Sigmoid colon (tissue), 7 donors: ENCODE measurements at regions of chr10 and their contacts with region 1.

Region 1: GRCh38 chr10:80924063-80924952 is 386.6 kb downstream of the SH2D4B start:
- DNase-seq: no peak
- H3K4me3 ChIP-seq: no peak overlapping the region
- H3K27ac ChIP-seq: no peak overlapping the region
- H3K4me1 ChIP-seq: no peaks in the 10 kb centered on the region
- H3K27me3 ChIP-seq: no peaks in the 10 kb centered on the region
- CTCF ChIP-seq: peak; percentile 6 to 59 (median 33)
- EP300 ChIP-seq: no peak
- POLR2A ChIP-seq: no peak

Region 2: GRCh38 chr10:80389809-80390208 is 534.5 kb before region 1 on chr10:
- intact Hi-C with region 1: loop called (anchors 5 kb)
- DNase-seq: no peak
- H3K4me3 ChIP-seq: no peak overlapping the region
- H3K27ac ChIP-seq: no peak overlapping the region
- H3K4me1 ChIP-seq: no peaks in the 10 kb centered on the region
- H3K27me3 ChIP-seq: no peaks in the 10 kb centered on the region
- CTCF ChIP-seq: no peak
- EP300 ChIP-seq: no peak
- POLR2A ChIP-seq: no peak

Region 3: GRCh38 chr10:80609331-80609730 is 315.0 kb before region 1 on chr10:
- intact Hi-C with region 1: no loop called
- DNase-seq: no peak
- H3K4me3 ChIP-seq: no peak overlapping the region
- H3K27ac ChIP-seq: no peak overlapping the region
- H3K4me1 ChIP-seq: no peaks in the 10 kb centered on the region
- H3K27me3 ChIP-seq: no peaks in the 10 kb centered on the region
- CTCF ChIP-seq: no peak
- EP300 ChIP-seq: no peak
- POLR2A ChIP-seq: no peak

Region 4: DNA sequence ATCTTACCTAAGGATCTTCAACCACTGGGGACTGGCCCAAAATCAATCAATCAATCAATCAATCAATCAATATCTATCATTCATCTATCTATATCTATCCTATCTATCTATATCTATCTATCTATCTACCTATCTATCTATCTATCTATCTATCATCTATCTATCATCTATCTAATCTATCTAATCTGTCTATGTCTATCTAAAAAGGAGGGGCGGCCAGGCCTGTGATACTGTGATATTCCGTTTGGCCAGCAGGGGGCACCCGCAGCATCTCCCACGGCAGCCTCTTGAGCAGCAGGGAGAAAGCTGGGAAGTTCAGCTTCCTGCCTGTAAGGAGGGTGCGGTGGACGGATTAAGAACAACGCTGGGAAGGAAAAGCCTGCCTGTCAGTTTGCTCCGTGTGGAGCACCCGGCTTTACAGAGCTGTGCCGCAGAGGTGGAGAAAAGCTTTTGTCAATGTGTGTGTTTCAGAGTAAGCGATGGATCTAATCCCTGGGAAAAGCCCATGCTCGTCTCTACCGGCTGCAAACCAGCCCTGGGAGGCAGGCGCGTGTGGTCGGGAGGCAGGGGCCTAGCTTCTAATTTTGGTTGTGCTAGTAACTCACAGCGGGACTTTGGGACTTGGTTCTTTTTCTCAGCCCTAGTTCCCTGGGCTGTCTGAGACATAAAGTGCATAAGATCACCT is 261.6 kb before region 1 on chr10:
- intact Hi-C with region 1: loop called (anchors 10 kb)
- DNase-seq: peak; percentile 89
- H3K4me3 ChIP-seq: peak overlapping the region in 3 of 4 donors; percentile 9 to 32 (median 29)
- H3K27ac ChIP-seq: peak overlapping the region; percentile 55 to 65 (median 61)
- H3K4me1 ChIP-seq: peaks cover 0 to 14% (median 2%) of the 10 kb centered on the region in 4 donors
- H3K27me3 ChIP-seq: no peaks in the 10 kb centered on the region
- CTCF ChIP-seq: peak; percentile 48 to 95 (median 84)
- EP300 ChIP-seq: no peak
- POLR2A ChIP-seq: no peak

Region 5: DNA sequence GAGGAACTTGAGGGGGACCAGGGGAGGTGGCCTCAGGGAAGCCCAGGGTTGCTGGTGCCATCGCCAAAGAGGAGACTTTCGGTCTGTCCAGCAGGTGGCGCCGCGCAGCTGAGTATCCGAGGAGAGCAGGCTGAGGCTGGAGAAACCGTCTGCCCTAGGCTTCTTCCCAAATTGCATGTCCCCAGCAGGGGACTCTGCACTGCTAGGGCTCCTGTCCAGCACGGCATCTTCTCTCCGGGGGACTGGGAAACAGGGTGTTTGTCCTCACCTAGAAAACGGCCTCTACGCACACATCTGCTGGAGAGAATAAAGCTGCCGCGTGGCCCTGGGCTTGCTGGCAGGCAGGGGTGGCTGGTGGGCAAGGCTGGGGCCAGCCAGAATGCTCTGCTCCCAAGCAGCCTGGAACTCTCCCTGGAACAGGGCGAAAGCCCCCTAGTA is 224.7 kb before region 1 on chr10:
- intact Hi-C with region 1: loop called (anchors 5 kb)
- DNase-seq: peak; percentile 80
- H3K4me3 ChIP-seq: no peak overlapping the region
- H3K27ac ChIP-seq: no peak overlapping the region
- H3K4me1 ChIP-seq: peaks cover 0 to 17% (median 13%) of the 10 kb centered on the region in 4 donors
- H3K27me3 ChIP-seq: no peaks in the 10 kb centered on the region
- CTCF ChIP-seq: peak in 3 of 4 experiments; percentile 53 to 79 (median 65)
- EP300 ChIP-seq: no peak
- POLR2A ChIP-seq: no peak

Region 6: GRCh38 chr10:80945264-80945880 is 21.1 kb after region 1 on chr10:
- intact Hi-C with region 1: no loop called
- DNase-seq: no peak
- H3K4me3 ChIP-seq: no peak overlapping the region
- H3K27ac ChIP-seq: no peak overlapping the region
- H3K4me1 ChIP-seq: peaks cover 0 to 7% (median 0%) of the 10 kb centered on the region in 4 donors
- H3K27me3 ChIP-seq: no peaks in the 10 kb centered on the region
- CTCF ChIP-seq: no peak
- EP300 ChIP-seq: no peak
- POLR2A ChIP-seq: no peak

Region 7: DNA sequence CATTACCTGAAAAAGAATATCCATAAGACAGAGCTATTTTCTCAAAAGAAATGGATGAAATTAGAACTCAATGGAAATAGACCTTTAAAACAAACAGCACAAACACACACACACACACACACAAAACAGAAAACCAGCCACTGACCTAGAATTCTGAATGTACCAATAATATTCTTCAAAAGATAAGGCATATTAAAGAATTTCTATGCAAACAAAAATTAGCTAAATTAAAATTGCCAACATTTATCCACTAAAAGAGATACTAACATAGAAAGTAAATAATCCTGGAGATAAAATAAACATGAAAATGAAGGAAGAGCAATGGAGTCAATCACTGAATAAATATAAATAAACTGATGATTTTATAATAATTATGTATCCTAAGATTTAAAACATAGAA is 44.6 kb after region 1 on chr10:
- intact Hi-C with region 1: no loop called
- DNase-seq: no peak
- H3K4me3 ChIP-seq: no peak overlapping the region
- H3K27ac ChIP-seq: no peak overlapping the region
- H3K4me1 ChIP-seq: no peaks in the 10 kb centered on the region
- H3K27me3 ChIP-seq: no peaks in the 10 kb centered on the region
- CTCF ChIP-seq: no peak
- EP300 ChIP-seq: no peak
- POLR2A ChIP-seq: no peak